ENCODE measurements at regions of chr5 and their contacts with region 1.

Region 1: GRCh38 chr5:88883059-88883835 is at the start of gene MEF2C:
- DNase-seq: peak; percentile 51
- H3K4me3 ChIP-seq: peak within 1 kb of the TSS; percentile 42 to 53
- H3K27ac ChIP-seq: peak within 1 kb of the TSS; percentile 74 to 82
- H3K4me1 ChIP-seq: no peaks in the 10 kb centered on the region
- H3K27me3 ChIP-seq: no peaks in the 10 kb centered on the region
- CTCF ChIP-seq: no peak
- POLR2A ChIP-seq: peak; percentile 74
- total RNA-seq, gene MEF2C: 13.9 to 44.0 TPM

Region 2: GRCh38 chr5:88833371-88834130 is 49.7 kb before region 1 on chr5:
- intact Hi-C with region 1: loop called (anchors 5 kb)
- DNase-seq: no peak
- H3K4me3 ChIP-seq: no peak overlapping the region
- H3K27ac ChIP-seq: peak overlapping the region in 1 of 2 donors; percentile 23
- H3K4me1 ChIP-seq: no peaks in the 10 kb centered on the region
- H3K27me3 ChIP-seq: no peaks in the 10 kb centered on the region
- CTCF ChIP-seq: no peak
- POLR2A ChIP-seq: no peak

Region 3: DNA sequence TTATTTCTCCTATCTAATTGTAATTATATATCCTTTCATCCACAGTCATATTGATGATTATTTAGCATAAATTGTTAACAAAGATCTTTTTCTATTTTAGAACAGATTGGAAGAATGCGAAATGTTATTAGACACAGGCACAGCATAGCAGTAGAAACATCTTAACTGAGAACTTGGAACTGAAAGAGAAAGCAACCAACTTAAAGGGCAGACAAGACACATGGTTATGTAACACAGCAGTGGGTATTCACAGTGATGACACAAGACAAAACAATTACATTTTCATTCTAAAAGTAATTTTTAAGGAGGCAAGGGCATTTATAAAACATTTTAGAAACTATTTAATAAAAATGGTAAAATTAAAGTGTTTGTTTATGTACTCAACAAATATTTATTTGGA is 57.5 kb after region 1 on chr5:
- intact Hi-C with region 1: loop called (anchors 5 kb)
- DNase-seq: no peak
- H3K4me3 ChIP-seq: no peak overlapping the region
- H3K27ac ChIP-seq: no peak overlapping the region
- H3K4me1 ChIP-seq: no peaks in the 10 kb centered on the region
- H3K27me3 ChIP-seq: no peaks in the 10 kb centered on the region
- CTCF ChIP-seq: no peak
- POLR2A ChIP-seq: no peak